ENCODE measurements at regions of chr10 and their contacts with region 1.

Region 1: GRCh38 chr10:99062591-99062990 is 173.1 kb downstream of the HPSE2 start:
- DNase-seq: no peak
- ATAC-seq: no peak
- H3K4me3 ChIP-seq: no peak overlapping the region
- H3K27ac ChIP-seq: no peak overlapping the region
- H3K4me1 ChIP-seq: no peaks in the 10 kb centered on the region
- H3K27me3 ChIP-seq: no peaks in the 10 kb centered on the region
- CTCF ChIP-seq: no peak
- EP300 ChIP-seq: no peak
- POLR2A ChIP-seq: no peak
- RAD21 ChIP-seq: no peak

Region 2: GRCh38 chr10:97128516-97129154 is 1934.0 kb before region 1 on chr10:
- CTCF ChIA-PET with region 1: no interaction called
- POLR2A ChIA-PET with region 1: no interaction called
- RAD21 ChIA-PET with region 1: no interaction called
- SMC1A ChIA-PET with region 1: no interaction called
- in situ Hi-C with region 1: no loop called
- intact Hi-C with region 1: loop called (anchors 10 kb)
- DNase-seq: no peak
- ATAC-seq: no peak
- H3K4me3 ChIP-seq: no peak overlapping the region
- H3K27ac ChIP-seq: no peak overlapping the region
- H3K4me1 ChIP-seq: no peaks in the 10 kb centered on the region
- H3K27me3 ChIP-seq: no peaks in the 10 kb centered on the region; a peak in 2 of 4 replicates
- CTCF ChIP-seq: no peak
- EP300 ChIP-seq: no peak
- POLR2A ChIP-seq: no peak
- RAD21 ChIP-seq: no peak

Region 3: GRCh38 chr10:99276848-99277486 is 214.4 kb after region 1 on chr10:
- CTCF ChIA-PET with region 1: no interaction called
- POLR2A ChIA-PET with region 1: no interaction called
- RAD21 ChIA-PET with region 1: no interaction called
- SMC1A ChIA-PET with region 1: no interaction called
- in situ Hi-C with region 1: no loop called
- intact Hi-C with region 1: no loop called
- DNase-seq: no peak
- ATAC-seq: no peak
- H3K4me3 ChIP-seq: no peak overlapping the region
- H3K27ac ChIP-seq: no peak overlapping the region
- H3K4me1 ChIP-seq: no peaks in the 10 kb centered on the region
- H3K27me3 ChIP-seq: no peaks in the 10 kb centered on the region
- CTCF ChIP-seq: peak; percentile 24 to 33 (median 29); a peak in 4 of 6 replicates
- EP300 ChIP-seq: no peak
- POLR2A ChIP-seq: no peak
- RAD21 ChIP-seq: peak; percentile 57